Lower leg skin (tissue), 4 donors: ENCODE measurements at regions of chr14 and their contacts with region 1.

Region 1: DNA sequence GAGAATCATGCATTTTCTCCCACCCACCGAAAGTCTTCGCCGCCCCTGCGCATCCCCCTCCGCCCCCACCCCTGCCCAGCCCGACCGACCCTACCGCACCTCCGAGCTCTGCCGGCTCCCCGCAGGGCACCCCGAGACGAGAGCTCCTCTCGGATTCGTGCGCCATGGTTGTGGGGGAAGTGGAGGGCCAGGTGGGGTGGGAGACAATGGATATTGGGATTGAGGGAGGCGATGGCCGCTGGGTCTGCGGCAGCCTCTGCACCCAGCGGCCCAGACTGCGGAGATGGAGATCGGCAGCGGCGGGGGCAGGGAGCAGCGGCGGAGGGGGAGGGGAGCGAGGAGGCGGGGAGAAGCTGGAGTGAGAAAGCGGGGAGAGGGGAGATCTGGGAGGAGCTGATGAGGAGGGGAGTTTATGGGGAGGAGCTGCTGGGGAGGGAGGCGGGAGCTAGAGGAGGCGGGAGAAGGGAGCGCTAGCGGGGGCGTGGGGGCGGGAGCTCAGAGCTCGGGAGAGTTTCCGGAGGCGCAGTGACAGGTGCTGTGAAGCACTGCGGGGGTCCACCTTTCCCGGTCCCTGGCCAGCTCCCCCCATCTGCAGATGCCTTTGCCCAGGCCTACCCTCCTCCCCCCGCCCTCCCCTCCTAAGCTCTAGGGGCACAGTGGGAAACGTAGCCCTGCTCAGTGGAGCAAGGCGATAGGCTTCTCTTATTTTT is at the start of gene SALL2:
- DNase-seq: peak; percentile 41 to 93
- H3K4me3 ChIP-seq: peak within 1 kb of the TSS; percentile 33
- CTCF ChIP-seq: no peak
- POLR2A ChIP-seq: no peak
- total RNA-seq, gene SALL2: 2.2 to 4.8 (median 4.4) TPM

Region 2: DNA sequence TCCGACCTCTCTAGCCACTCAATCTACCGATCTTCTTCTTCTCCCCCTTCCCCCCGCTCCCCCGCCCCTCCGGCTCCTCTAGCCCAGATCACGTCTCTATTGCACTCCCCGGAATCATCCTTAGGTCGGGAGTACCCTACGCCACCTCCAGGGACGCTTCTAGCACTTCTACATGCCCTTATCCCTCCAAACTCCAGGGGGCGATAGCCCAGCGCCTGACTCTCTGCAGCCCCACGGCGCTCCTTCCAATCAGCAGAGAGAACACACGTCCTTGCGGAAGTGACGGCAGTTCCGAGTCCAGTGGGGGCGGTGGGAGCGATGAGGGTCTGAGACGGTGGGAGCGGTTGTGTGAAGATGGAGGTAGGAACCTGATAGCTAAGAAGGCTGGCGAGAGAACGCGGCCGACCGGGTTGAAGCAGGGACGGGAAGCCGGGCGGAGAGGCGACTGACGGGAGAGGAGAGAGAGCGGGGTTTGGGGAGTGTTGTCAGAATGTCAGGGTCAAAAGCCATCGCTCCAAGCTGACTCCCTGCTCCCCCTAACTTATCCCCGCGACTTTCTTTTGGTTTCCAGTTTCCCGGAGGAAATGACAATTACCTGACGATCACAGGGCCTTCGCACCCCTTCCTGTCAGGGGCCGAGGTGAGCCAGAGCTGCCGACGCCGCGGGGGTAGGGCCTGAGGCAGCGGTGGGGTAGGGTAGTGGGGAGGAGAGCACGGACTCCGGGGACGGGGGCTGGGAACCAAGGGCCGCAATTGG is 49.0 kb before region 1 on chr14 and contains the starts of genes RAB2B and TOX4:
- intact Hi-C with region 1: loop called (anchors 2 kb)
- DNase-seq: peak; percentile 97 to 99
- H3K4me3 ChIP-seq: peak within 1 kb of the TSS; percentile 95
- CTCF ChIP-seq: peak in 1 of 3 donors; percentile 99
- POLR2A ChIP-seq: peak in 1 of 2 donors; percentile 62
- total RNA-seq, gene RAB2B: 11.3 to 19.9 (median 15.4) TPM
- total RNA-seq, gene TOX4: 69.8 to 94.9 (median 75.7) TPM

Region 3: GRCh38 chr14:22303589-22304195 is 777.6 kb after region 1 on chr14:
- intact Hi-C with region 1: no loop called
- DNase-seq: no peak
- H3K4me3 ChIP-seq: no peak overlapping the region
- CTCF ChIP-seq: no peak
- POLR2A ChIP-seq: no peak